ENCODE measurements at regions of chr6 and their contacts with region 1.

Region 1: GRCh38 chr6:117288083-117288715 is 22.8 kb downstream of the VGLL2 start:
- DNase-seq: peak; percentile 23 to 43
- ATAC-seq: peak; percentile 71 to 77
- H3K4me3 ChIP-seq: peak overlapping the region in 1 of 4 donors; percentile 9
- H3K27ac ChIP-seq: peak overlapping the region; percentile 75 to 84 (median 78)
- H3K4me1 ChIP-seq: peaks cover 37 to 43% of the 10 kb centered on the region in 2 donors
- H3K27me3 ChIP-seq: no peaks in the 10 kb centered on the region
- CTCF ChIP-seq: no peak
- POLR2A ChIP-seq: peak in 1 of 2 donors; percentile 18

Region 2: GRCh38 chr6:117304446-117304845 is 16.2 kb after region 1 on chr6:
- in situ Hi-C with region 1: no loop called
- intact Hi-C with region 1: loop called (anchors 2 kb)
- DNase-seq: no peak
- ATAC-seq: no peak
- H3K4me3 ChIP-seq: no peak overlapping the region
- H3K27ac ChIP-seq: peak overlapping the region in 3 of 4 donors; percentile 80 to 93 (median 81)
- H3K4me1 ChIP-seq: peaks cover 27 to 29% of the 10 kb centered on the region in 2 donors
- H3K27me3 ChIP-seq: no peaks in the 10 kb centered on the region
- CTCF ChIP-seq: no peak
- POLR2A ChIP-seq: no peak